ENCODE measurements at regions of chr6 and their contacts with region 1.

Region 1: GRCh38 chr6:118881440-118882313 is 12.3 kb upstream of the ASF1A start:
- DNase-seq: no peak
- H3K4me3 ChIP-seq: no peak overlapping the region
- H3K27ac ChIP-seq: no peak overlapping the region
- H3K4me1 ChIP-seq: no peaks in the 10 kb centered on the region
- H3K27me3 ChIP-seq: no peaks in the 10 kb centered on the region
- CTCF ChIP-seq: no peak
- POLR2A ChIP-seq: no peak

Region 2: DNA sequence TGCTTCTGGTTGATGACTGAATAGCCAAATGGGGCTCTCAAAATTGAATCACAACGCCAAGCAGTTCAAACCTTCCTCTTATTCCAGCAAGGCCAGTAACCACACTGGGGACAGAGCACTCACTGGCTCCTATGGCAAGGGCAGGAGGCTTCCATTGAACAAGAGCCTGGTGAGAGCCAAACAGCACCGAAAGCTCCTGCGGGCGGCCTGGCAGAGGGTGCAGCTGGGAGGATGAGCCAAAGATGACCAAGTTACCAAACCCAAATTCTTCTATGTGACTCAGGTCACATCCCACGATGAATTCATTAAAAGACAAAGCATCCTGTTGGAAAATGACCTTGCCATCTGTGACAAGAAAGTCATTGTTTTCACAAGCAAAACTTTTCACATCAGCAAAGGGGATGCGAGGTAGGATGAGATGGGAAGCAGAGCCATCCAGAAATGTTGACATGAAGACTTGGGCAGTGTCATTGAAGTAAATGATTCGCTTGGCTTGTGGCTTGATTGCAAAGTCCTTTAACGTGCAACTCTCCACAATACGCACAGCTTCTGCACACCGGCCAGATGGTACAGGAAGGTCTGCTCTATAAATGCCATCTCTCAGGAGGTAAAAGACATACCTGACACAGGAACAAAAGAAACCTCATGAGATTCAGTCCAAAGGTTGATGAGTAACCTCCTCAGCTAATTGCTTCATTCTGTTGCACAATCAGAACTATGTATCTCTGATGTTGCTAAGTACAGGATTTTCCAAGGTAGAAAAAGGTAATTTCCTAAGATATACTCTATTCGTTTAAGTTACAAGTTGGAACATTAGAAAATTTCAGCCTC is 1492.2 kb before region 1 on chr6:
- CTCF ChIA-PET with region 1: no interaction called
- POLR2A ChIA-PET with region 1: no interaction called
- dilution Hi-C with region 1: no loop called
- intact Hi-C with region 1: loop called (anchors 5 kb)
- DNase-seq: no peak
- H3K4me3 ChIP-seq: no peak overlapping the region
- H3K27ac ChIP-seq: no peak overlapping the region
- H3K4me1 ChIP-seq: no peaks in the 10 kb centered on the region
- H3K27me3 ChIP-seq: peaks cover 2 to 6% of the 10 kb centered on the region in 2 experiments
- CTCF ChIP-seq: no peak
- POLR2A ChIP-seq: no peak

Region 3: GRCh38 chr6:118776607-118777549 is 104.8 kb before region 1 on chr6:
- CTCF ChIA-PET with region 1: no interaction called
- POLR2A ChIA-PET with region 1: no interaction called
- dilution Hi-C with region 1: no loop called
- intact Hi-C with region 1: no loop called
- DNase-seq: peak; percentile 84
- H3K4me3 ChIP-seq: no peak overlapping the region
- H3K27ac ChIP-seq: no peak overlapping the region
- H3K4me1 ChIP-seq: no peaks in the 10 kb centered on the region
- H3K27me3 ChIP-seq: peaks cover 7% of the 10 kb centered on the region in 2 experiments
- CTCF ChIP-seq: peak; percentile 58 to 59
- POLR2A ChIP-seq: no peak